Ovary (tissue), 10 donors: ENCODE measurements at regions of chr1 and their contacts with region 1.

Region 1: GRCh38 chr1:176843352-176844297 is 320.9 kb downstream of the ASTN1 start:
- DNase-seq: no peak
- H3K4me3 ChIP-seq: no peak overlapping the region
- H3K27ac ChIP-seq: no peak overlapping the region
- H3K4me1 ChIP-seq: no peaks in the 10 kb centered on the region
- H3K27me3 ChIP-seq: no peaks in the 10 kb centered on the region
- CTCF ChIP-seq: peak in 1 of 3 donors; percentile 23
- EP300 ChIP-seq: no peak
- POLR2A ChIP-seq: no peak

Region 2: GRCh38 chr1:175146529-175147213 is 1697.0 kb before region 1 on chr1:
- intact Hi-C with region 1: loop called in 1 of 4 experiments (anchors 10 kb)
- DNase-seq: peak; percentile 22 to 71 (median 58)
- H3K4me3 ChIP-seq: no peak overlapping the region
- H3K27ac ChIP-seq: no peak overlapping the region
- H3K4me1 ChIP-seq: no peaks in the 10 kb centered on the region
- H3K27me3 ChIP-seq: no peaks in the 10 kb centered on the region
- CTCF ChIP-seq: peak; percentile 15 to 31 (median 28)
- EP300 ChIP-seq: no peak
- POLR2A ChIP-seq: no peak

Region 3: GRCh38 chr1:176559878-176560277 is 283.7 kb before region 1 on chr1:
- intact Hi-C with region 1: loop called in 1 of 4 experiments (anchors 10 kb)
- DNase-seq: peak in 1 of 5 donors; percentile 19
- H3K4me3 ChIP-seq: no peak overlapping the region
- H3K27ac ChIP-seq: no peak overlapping the region
- H3K4me1 ChIP-seq: no peaks in the 10 kb centered on the region
- H3K27me3 ChIP-seq: no peaks in the 10 kb centered on the region
- CTCF ChIP-seq: peak in 1 of 3 donors; percentile 35
- EP300 ChIP-seq: no peak
- POLR2A ChIP-seq: no peak